ENCODE measurements at regions of chr5 and their contacts with region 1.

Region 1: DNA sequence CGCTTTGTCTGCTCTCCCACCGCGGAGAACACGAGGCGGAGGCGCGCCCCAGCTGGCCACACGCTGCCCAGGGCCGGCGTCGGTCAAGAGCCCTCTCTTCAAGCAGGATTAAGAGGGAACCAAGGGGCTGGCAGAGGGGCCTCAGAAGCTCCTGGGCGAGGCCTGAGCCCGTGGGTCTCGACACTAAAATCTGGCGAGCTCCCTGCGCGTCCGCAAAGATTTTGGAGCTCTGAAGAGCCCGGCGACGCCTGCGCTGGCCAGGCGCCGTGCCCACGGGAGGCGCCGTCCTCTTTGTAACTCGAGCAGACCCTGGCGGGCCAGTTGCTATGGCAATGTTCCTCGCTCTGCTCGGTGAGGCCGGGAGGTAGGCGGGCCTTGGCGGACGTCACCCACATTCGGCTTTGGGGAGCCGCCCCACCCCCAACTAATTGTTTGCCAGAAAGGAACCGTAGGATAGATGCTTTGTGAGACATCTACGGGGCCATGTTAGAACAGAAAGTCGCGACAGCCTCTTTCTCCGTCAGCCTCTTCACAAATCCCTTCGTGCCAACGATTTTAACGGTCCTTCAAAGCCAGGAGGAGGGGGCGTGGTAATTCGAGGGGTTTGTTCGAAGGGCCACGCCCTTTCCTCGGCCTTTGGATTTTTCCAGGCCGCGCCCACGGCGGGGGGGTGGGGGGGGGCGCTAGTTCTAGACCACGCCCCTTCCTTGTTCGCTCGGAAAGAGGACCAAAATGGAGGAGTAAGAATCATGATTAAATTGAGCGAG is 714 bp upstream of the CNOT8 start:
- DNase-seq: peak; percentile 90 to 97
- ATAC-seq: peak; percentile 91
- H3K4me3 ChIP-seq: peak overlapping the region; percentile 76
- H3K27ac ChIP-seq: peak overlapping the region; percentile 87 to 98
- H3K4me1 ChIP-seq: peaks cover 30% of the 10 kb centered on the region; the same call in 2 of the 3 replicates
- CTCF ChIP-seq: no peak
- EP300 ChIP-seq: no peak
- POLR2A ChIP-seq: peak; percentile 68
- RAD21 ChIP-seq: peak; percentile 1 to 18; a peak in 1 of 5 replicates

Region 2: GRCh38 chr5:154834053-154834452 is 23.7 kb before region 1 on chr5:
- CTCF ChIA-PET with region 1: interaction called, 3 read pairs
- POLR2A ChIA-PET with region 1: interaction called, 14 read pairs
- DNase-seq: no peak
- ATAC-seq: no peak
- H3K4me3 ChIP-seq: no peak overlapping the region
- H3K27ac ChIP-seq: no peak overlapping the region
- H3K4me1 ChIP-seq: peaks cover 28% of the 10 kb centered on the region
- CTCF ChIP-seq: no peak
- EP300 ChIP-seq: no peak
- POLR2A ChIP-seq: no peak
- RAD21 ChIP-seq: no peak

Region 3: GRCh38 chr5:154868702-154869101 is 11.0 kb after region 1 on chr5:
- CTCF ChIA-PET with region 1: interaction called, 4 read pairs
- POLR2A ChIA-PET with region 1: interaction called, 10 read pairs
- DNase-seq: peak; percentile 24 to 38
- ATAC-seq: peak; percentile 84 to 91
- H3K4me3 ChIP-seq: no peak overlapping the region
- H3K27ac ChIP-seq: no peak overlapping the region
- H3K4me1 ChIP-seq: peaks cover 12% of the 10 kb centered on the region
- CTCF ChIP-seq: peak; percentile 17; the same call in 1 of the 3 replicates
- EP300 ChIP-seq: no peak
- POLR2A ChIP-seq: no peak
- RAD21 ChIP-seq: peak; percentile 15 to 36; a peak in 1 of 5 replicates